B cell (primary cell): ENCODE measurements at regions of chr19 and their contacts with region 1.

Region 1: DNA sequence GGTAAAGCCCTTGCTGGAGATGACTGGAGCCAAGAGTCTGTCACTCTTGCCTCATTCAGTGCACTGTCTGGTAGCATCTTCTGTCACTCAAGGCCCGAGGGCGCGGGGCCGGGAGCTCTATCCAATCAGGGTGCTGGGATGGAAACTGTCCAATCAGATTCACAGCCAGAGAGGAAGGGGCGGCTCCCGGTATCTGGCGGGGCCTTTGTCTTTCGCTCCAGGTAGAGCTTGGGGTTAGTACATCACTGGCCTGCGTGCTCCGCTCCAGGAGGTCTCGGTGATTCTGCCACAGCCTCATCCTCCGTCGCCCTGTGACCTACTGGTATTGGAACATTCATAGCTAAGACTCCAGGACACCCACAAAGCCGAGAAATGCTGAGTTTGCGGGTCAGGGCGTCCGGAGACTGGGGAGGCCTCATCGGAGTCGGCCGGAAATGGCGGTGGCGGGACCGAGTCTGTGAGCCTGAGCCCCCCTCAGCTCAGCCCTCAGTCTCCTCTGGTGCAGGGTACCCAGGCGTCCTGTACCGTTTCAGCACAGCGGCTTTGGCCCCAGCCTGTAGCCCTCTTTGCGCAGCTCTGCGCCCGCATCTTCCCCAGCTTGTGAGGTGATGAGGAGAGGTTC is 20.6 kb upstream of the ZNF430 start:
- DNase-seq: peak; percentile 93
- ATAC-seq: peak; percentile 100
- H3K4me3 ChIP-seq: peak overlapping the region; percentile 34 to 84 (median 60)
- H3K4me3 Mint-ChIP-seq: peak overlapping the region; percentile 87
- H3K27ac ChIP-seq: no peak overlapping the region
- H3K27ac Mint-ChIP-seq: peak overlapping the region; percentile 61
- H3K4me1 ChIP-seq: peaks cover 0 to 5% of the 10 kb centered on the region in 2 donors
- H3K4me1 Mint-ChIP-seq: peaks cover 6% of the 10 kb centered on the region
- H3K27me3 ChIP-seq: no peaks in the 10 kb centered on the region
- H3K27me3 Mint-ChIP-seq: no peaks in the 10 kb centered on the region
- CTCF ChIP-seq: no peak

Region 2: GRCh38 chr19:20776083-20777076 is 223.5 kb before region 1 on chr19 and contains the start of gene ZNF66:
- CTCF ChIA-PET with region 1: no interaction called
- POLR2A ChIA-PET with region 1: no interaction called
- intact Hi-C with region 1: loop called (anchors 5 kb)
- DNase-seq: peak; percentile 95
- ATAC-seq: peak; percentile 98
- H3K4me3 ChIP-seq: peak within 1 kb of the TSS; percentile 74 to 91 (median 80)
- H3K4me3 Mint-ChIP-seq: peak within 1 kb of the TSS; percentile 97
- H3K27ac ChIP-seq: peak within 1 kb of the TSS; percentile 66 to 90
- H3K27ac Mint-ChIP-seq: peak within 1 kb of the TSS; percentile 91
- H3K4me1 ChIP-seq: peaks cover 0 to 5% of the 10 kb centered on the region in 2 donors
- H3K4me1 Mint-ChIP-seq: peaks cover 29% of the 10 kb centered on the region
- H3K27me3 ChIP-seq: no peaks in the 10 kb centered on the region
- H3K27me3 Mint-ChIP-seq: no peaks in the 10 kb centered on the region
- CTCF ChIP-seq: no peak
- total RNA-seq, gene ZNF66: 25.0 and 27.7 TPM in 2 replicates

Region 3: GRCh38 chr19:21082011-21082975 is 82.5 kb after region 1 on chr19 and contains the start of gene ZNF714:
- CTCF ChIA-PET with region 1: interaction called, 4 read pairs
- POLR2A ChIA-PET with region 1: no interaction called
- intact Hi-C with region 1: loop called (anchors 1 kb)
- DNase-seq: peak; percentile 84
- ATAC-seq: peak; percentile 100
- H3K4me3 ChIP-seq: peak within 1 kb of the TSS in 4 of 5 experiments; percentile 87 to 96 (median 90)
- H3K4me3 Mint-ChIP-seq: peak within 1 kb of the TSS; percentile 99
- H3K27ac ChIP-seq: peak within 1 kb of the TSS; percentile 52 to 57
- H3K27ac Mint-ChIP-seq: peak within 1 kb of the TSS; percentile 94
- H3K4me1 ChIP-seq: peaks cover 0 to 3% of the 10 kb centered on the region in 2 donors
- H3K4me1 Mint-ChIP-seq: peaks cover 14% of the 10 kb centered on the region
- H3K27me3 ChIP-seq: no peaks in the 10 kb centered on the region
- H3K27me3 Mint-ChIP-seq: no peaks in the 10 kb centered on the region
- CTCF ChIP-seq: no peak
- total RNA-seq, gene ZNF714: 10.7 and 11.9 TPM in 2 replicates